MCF 10A (cell line): ENCODE measurements at regions of chr4 and their contacts with region 1.

Region 1: DNA sequence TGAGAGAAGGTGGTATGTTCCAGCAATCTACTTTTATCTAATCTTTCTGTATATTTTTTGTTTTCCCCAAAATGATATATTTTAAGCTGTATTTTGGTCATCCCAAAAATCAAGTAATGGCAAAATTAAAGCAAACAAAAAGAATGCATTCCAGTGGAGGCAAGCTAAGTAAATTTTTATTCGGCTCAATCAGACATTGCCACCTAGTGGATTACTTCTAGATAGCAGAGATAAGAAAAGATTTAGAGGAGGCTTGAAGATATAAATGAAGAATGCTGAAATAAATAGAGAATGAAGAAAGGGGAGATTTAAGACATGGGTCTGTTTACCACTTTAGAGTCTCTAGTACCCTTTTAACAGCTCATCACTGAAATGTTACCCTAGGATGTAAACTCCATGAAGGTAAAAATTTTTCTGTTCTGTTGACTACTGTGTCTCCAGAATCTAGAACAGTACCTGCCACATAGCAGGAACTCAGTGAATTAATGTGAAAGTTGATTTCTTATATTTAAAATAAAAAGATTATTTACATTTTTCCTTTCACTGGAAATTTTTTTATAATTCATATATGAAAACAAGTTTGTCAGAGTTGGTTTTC is 110.9 kb upstream of the ANK2 start:
- DNase-seq: peak; percentile 57
- H3K4me3 Mint-ChIP-seq: no peak overlapping the region
- H3K27ac Mint-ChIP-seq: no peak overlapping the region
- H3K4me1 Mint-ChIP-seq: no peaks in the 10 kb centered on the region
- H3K27me3 Mint-ChIP-seq: no peaks in the 10 kb centered on the region
- CTCF ChIP-seq: peak; percentile 77

Region 2: GRCh38 chr4:112817933-112818593 is 120.5 kb before region 1 on chr4:
- CTCF ChIA-PET with region 1: interaction called, 11 read pairs
- POLR2A ChIA-PET with region 1: interaction called, 3 read pairs
- intact Hi-C with region 1: no loop called
- DNase-seq: peak; percentile 86
- H3K4me3 Mint-ChIP-seq: peak overlapping the region; percentile 86
- H3K27ac Mint-ChIP-seq: peak overlapping the region; percentile 30
- H3K4me1 Mint-ChIP-seq: peaks cover 19% of the 10 kb centered on the region
- H3K27me3 Mint-ChIP-seq: no peaks in the 10 kb centered on the region
- CTCF ChIP-seq: no peak

Region 3: GRCh38 chr4:112860830-112861690 is 77.5 kb before region 1 on chr4:
- CTCF ChIA-PET with region 1: interaction called, 162 read pairs
- POLR2A ChIA-PET with region 1: interaction called, 3 read pairs
- intact Hi-C with region 1: loop called (anchors 1 kb)
- DNase-seq: no peak
- H3K4me3 Mint-ChIP-seq: no peak overlapping the region
- H3K27ac Mint-ChIP-seq: no peak overlapping the region
- H3K4me1 Mint-ChIP-seq: peaks cover 16% of the 10 kb centered on the region
- H3K27me3 Mint-ChIP-seq: no peaks in the 10 kb centered on the region
- CTCF ChIP-seq: no peak

Region 4: GRCh38 chr4:112923516-112923915 is 15.0 kb before region 1 on chr4:
- CTCF ChIA-PET with region 1: interaction called, 18 read pairs
- POLR2A ChIA-PET with region 1: no interaction called
- intact Hi-C with region 1: no loop called
- DNase-seq: no peak
- H3K4me3 Mint-ChIP-seq: no peak overlapping the region
- H3K27ac Mint-ChIP-seq: no peak overlapping the region
- H3K4me1 Mint-ChIP-seq: no peaks in the 10 kb centered on the region
- H3K27me3 Mint-ChIP-seq: no peaks in the 10 kb centered on the region
- CTCF ChIP-seq: no peak